SK-N-SH (cell line): ENCODE measurements at regions of chr3 and their contacts with region 1.

Region 1: GRCh38 chr3:46576-46975 is 150.0 kb upstream of the CHL1 start:
- DNase-seq: no peak
- H3K4me3 ChIP-seq: no peak overlapping the region
- H3K27ac ChIP-seq: no peak overlapping the region
- H3K4me1 ChIP-seq: no peaks in the 10 kb centered on the region
- H3K27me3 ChIP-seq: no peaks in the 10 kb centered on the region
- CTCF ChIP-seq: no peak
- EP300 ChIP-seq: no peak
- RAD21 ChIP-seq: no peak

Region 2: GRCh38 chr3:217099-217813 is 170.7 kb after region 1 on chr3:
- CTCF ChIA-PET with region 1: no interaction called
- POLR2A ChIA-PET with region 1: no interaction called
- DNase-seq: no peak
- H3K4me3 ChIP-seq: no peak overlapping the region
- H3K27ac ChIP-seq: no peak overlapping the region
- H3K4me1 ChIP-seq: no peaks in the 10 kb centered on the region
- H3K27me3 ChIP-seq: no peaks in the 10 kb centered on the region
- CTCF ChIP-seq: no peak
- EP300 ChIP-seq: no peak
- RAD21 ChIP-seq: no peak

Region 3: GRCh38 chr3:243356-243725 is 196.8 kb after region 1 on chr3:
- CTCF ChIA-PET with region 1: no interaction called
- POLR2A ChIA-PET with region 1: no interaction called
- DNase-seq: no peak
- H3K4me3 ChIP-seq: no peak overlapping the region
- H3K27ac ChIP-seq: no peak overlapping the region
- H3K4me1 ChIP-seq: no peaks in the 10 kb centered on the region
- H3K27me3 ChIP-seq: no peaks in the 10 kb centered on the region
- CTCF ChIP-seq: no peak
- EP300 ChIP-seq: no peak
- RAD21 ChIP-seq: no peak

Region 4: DNA sequence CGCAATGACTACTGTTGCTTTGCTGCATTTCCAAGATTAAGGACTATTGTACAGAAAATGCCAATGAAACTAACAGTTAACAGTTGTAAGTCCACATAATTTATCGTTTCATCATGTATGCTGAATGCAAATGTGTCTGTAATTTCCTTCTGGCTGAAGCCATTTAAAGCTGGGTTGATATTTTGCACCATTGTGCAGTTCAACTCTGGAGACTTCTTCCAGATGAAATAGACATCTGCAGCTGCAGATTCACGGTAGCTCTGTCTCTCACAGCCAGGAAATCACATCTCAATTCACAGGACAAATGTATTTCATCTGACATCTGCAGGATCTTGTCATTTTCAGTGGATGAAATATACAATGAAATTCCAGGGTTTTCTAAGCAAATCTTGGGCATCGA is 295.4 kb after region 1 on chr3:
- CTCF ChIA-PET with region 1: interaction called, 12 read pairs
- POLR2A ChIA-PET with region 1: no interaction called
- DNase-seq: no peak
- H3K4me3 ChIP-seq: no peak overlapping the region
- H3K27ac ChIP-seq: no peak overlapping the region
- H3K4me1 ChIP-seq: no peaks in the 10 kb centered on the region
- H3K27me3 ChIP-seq: no peaks in the 10 kb centered on the region
- CTCF ChIP-seq: no peak
- EP300 ChIP-seq: no peak
- RAD21 ChIP-seq: no peak

Region 5: DNA sequence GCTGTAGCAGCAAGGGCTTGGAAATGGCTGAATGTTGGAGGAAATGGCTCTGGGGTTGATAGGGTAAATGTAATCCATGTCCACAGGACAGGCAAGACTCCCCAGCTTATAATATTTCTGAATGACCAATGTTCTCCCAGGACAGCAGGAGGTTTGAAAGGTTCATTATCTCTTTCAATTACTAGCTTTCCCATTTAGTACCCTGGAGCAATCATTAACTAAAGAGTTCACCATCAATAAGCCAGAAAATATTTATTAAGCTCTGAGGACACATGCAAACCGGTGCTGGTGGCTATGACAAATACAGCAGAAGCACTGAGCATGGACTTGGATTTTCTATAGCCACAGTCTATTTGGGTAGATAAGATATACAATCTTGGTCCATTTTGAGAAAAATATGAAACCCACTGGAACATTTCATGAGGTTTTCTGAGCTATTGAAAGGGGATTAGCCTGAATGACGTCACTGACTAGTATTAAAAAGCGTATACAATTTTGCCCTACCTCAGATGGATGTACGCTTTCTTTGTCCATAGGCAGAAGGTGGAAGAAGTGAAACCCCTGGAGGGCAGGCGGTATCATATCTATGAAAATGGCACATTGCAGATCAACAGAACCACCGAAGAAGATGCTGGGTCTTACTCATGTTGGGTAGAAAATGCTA is 316.2 kb after region 1 on chr3:
- CTCF ChIA-PET with region 1: interaction called, 265 read pairs
- POLR2A ChIA-PET with region 1: no interaction called
- DNase-seq: no peak
- H3K4me3 ChIP-seq: no peak overlapping the region
- H3K27ac ChIP-seq: no peak overlapping the region
- H3K4me1 ChIP-seq: no peaks in the 10 kb centered on the region
- H3K27me3 ChIP-seq: no peaks in the 10 kb centered on the region
- CTCF ChIP-seq: no peak
- EP300 ChIP-seq: no peak
- RAD21 ChIP-seq: no peak

Region 6: DNA sequence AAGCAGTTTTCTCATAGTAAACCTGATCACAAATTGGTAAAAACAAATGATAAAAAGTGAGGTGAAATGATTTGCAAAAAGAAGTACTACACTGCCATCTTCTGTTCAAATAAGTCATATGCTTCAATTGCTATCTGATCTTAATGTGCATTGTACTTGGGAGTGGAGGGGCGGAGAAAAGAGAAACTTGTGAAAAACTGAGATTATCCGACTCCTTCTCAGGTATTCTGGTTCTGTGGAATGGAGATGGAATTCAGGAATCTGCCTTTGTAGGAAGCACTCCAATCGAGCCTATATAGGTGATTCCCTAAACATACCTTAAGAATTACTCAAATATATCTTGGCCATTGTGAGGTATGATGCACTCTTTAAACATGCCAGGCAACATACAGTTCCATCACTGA is 330.6 kb after region 1 on chr3:
- CTCF ChIA-PET with region 1: interaction called, 15 read pairs
- POLR2A ChIA-PET with region 1: no interaction called
- DNase-seq: peak; percentile 36
- H3K4me3 ChIP-seq: peak overlapping the region; percentile 12 to 49; a peak in 1 of 4 replicates
- H3K27ac ChIP-seq: no peak overlapping the region
- H3K4me1 ChIP-seq: no peaks in the 10 kb centered on the region
- H3K27me3 ChIP-seq: no peaks in the 10 kb centered on the region
- CTCF ChIP-seq: peak; percentile 57
- EP300 ChIP-seq: no peak
- RAD21 ChIP-seq: peak; percentile 70